CD4-positive, alpha-beta T cell (primary cell): ENCODE measurements at regions of chr3 and their contacts with region 1.

Region 1: DNA sequence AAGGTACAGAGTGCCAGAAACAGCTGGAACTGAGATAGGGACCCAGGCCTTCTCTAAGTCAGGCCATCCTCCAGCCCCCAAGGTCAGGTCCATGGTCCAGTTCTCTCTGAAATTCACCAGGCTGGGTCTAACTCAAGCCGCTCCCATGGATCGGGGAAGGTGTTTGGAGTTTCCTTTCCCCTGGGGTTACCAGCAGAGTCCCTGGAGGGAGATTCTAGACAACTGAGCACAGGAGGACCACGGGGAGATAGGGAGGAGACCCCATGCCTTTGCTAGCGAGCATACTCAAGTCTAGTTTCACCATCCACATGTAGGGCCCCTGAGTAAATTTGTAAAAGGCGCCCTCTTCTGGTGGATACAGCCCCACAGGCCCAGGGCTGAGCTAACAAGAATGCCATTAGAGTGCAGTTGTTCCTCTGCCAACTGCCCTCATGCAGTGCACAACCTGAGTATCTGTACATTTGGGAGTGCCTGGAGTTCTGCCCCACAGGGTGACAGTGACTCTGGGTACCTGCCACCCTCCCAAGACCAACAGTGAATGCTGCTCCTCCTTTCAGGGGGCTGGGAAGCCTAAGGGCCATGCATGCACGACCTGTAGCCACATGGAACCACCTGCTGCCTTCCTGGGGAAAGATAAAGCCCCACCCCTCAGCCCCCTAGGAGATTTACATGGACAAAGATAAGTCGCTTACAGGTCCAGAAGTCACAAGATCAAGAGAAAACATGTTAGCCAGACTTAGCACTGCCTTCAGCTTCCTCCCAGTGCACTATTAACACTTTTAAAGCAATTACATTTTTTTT is 89.0 kb downstream of the IQSEC1 start:
- DNase-seq: peak; percentile 28 to 75 (median 44)
- ATAC-seq: peak; percentile 88
- H3K4me3 ChIP-seq: no peak overlapping the region
- H3K4me3 Mint-ChIP-seq: peak overlapping the region; percentile 35
- H3K27ac ChIP-seq: no peak overlapping the region
- H3K27ac Mint-ChIP-seq: peak overlapping the region; percentile 57
- H3K4me1 ChIP-seq: peaks cover 61% of the 10 kb centered on the region
- H3K4me1 Mint-ChIP-seq: peaks cover 71% of the 10 kb centered on the region
- H3K27me3 ChIP-seq: no peaks in the 10 kb centered on the region
- H3K27me3 Mint-ChIP-seq: no peaks in the 10 kb centered on the region
- CTCF ChIP-seq: peak; percentile 56

Region 2: GRCh38 chr3:12868039-12869034 is 115.9 kb before region 1 on chr3:
- CTCF ChIA-PET with region 1: no interaction called
- POLR2A ChIA-PET with region 1: no interaction called
- intact Hi-C with region 1: loop called in 1 of 2 experiments (anchors 5 kb)
- DNase-seq: peak in 13 of 14 experiments; percentile 12 to 78 (median 46)
- ATAC-seq: peak; percentile 82
- H3K4me3 ChIP-seq: peak overlapping the region; percentile 54
- H3K4me3 Mint-ChIP-seq: peak overlapping the region; percentile 90
- H3K27ac ChIP-seq: no peak overlapping the region
- H3K27ac Mint-ChIP-seq: no peak overlapping the region
- H3K4me1 ChIP-seq: peaks cover 26% of the 10 kb centered on the region
- H3K4me1 Mint-ChIP-seq: peaks cover 14% of the 10 kb centered on the region
- H3K27me3 ChIP-seq: peaks cover 9 to 15% of the 10 kb centered on the region in 2 experiments
- H3K27me3 Mint-ChIP-seq: peaks cover 40% of the 10 kb centered on the region
- CTCF ChIP-seq: peak; percentile 87

Region 3: GRCh38 chr3:12973827-12974226 is 10.4 kb before region 1 on chr3:
- CTCF ChIA-PET with region 1: interaction called, 7 read pairs
- POLR2A ChIA-PET with region 1: no interaction called
- intact Hi-C with region 1: loop called in 1 of 2 experiments (anchors 2 kb)
- DNase-seq: no peak
- ATAC-seq: no peak
- H3K4me3 ChIP-seq: no peak overlapping the region
- H3K4me3 Mint-ChIP-seq: no peak overlapping the region
- H3K27ac ChIP-seq: no peak overlapping the region
- H3K27ac Mint-ChIP-seq: no peak overlapping the region
- H3K4me1 ChIP-seq: peaks cover 32% of the 10 kb centered on the region
- H3K4me1 Mint-ChIP-seq: peaks cover 54% of the 10 kb centered on the region
- H3K27me3 ChIP-seq: no peaks in the 10 kb centered on the region
- H3K27me3 Mint-ChIP-seq: no peaks in the 10 kb centered on the region
- CTCF ChIP-seq: no peak

Region 4: DNA sequence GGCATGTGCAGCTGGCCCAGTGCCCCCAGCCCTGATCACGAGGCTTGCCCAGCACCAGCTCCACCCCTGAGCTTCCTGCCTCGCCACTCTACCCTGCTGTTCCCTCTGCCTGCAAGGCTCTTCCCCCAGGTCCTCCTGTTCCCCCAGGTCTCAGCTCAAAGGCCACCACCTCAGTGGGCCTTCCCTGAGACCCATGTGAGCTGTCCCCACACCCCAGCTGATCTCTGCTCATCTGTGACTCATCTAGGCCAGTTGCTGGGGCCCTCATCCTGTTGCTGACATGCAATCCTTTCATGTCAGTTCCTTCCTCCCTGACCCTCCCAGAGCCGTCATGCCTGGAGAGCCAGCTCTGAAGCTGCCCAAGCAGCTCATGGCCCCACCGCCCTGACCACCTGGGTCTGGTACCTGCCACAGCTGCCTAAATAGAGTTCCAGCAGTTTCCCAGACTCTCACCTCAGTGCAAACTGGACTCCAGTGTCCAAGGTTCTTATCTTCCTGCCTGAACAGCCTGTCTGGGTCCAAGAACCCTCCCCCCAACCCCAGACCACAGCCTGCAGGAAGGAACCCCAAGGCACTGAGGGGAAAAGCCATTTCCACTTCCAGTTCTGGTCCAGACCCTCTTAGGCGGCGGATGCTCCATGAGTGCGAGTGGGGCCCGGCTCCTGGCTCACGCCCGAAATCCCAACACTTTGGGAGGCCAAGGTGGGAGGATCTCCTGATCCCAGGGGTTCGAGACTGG is 205.6 kb after region 1 on chr3:
- CTCF ChIA-PET with region 1: no interaction called
- POLR2A ChIA-PET with region 1: no interaction called
- intact Hi-C with region 1: no loop called
- DNase-seq: peak in 4 of 14 experiments; percentile 33 to 72 (median 57)
- ATAC-seq: no peak
- H3K4me3 ChIP-seq: no peak overlapping the region
- H3K4me3 Mint-ChIP-seq: no peak overlapping the region
- H3K27ac ChIP-seq: no peak overlapping the region
- H3K27ac Mint-ChIP-seq: no peak overlapping the region
- H3K4me1 ChIP-seq: peaks cover 32% of the 10 kb centered on the region
- H3K4me1 Mint-ChIP-seq: peaks cover 8% of the 10 kb centered on the region
- H3K27me3 ChIP-seq: no peaks in the 10 kb centered on the region
- H3K27me3 Mint-ChIP-seq: peaks cover 10% of the 10 kb centered on the region
- CTCF ChIP-seq: no peak